ENCODE measurements at regions of chr9 and their contacts with region 1.

Region 1: DNA sequence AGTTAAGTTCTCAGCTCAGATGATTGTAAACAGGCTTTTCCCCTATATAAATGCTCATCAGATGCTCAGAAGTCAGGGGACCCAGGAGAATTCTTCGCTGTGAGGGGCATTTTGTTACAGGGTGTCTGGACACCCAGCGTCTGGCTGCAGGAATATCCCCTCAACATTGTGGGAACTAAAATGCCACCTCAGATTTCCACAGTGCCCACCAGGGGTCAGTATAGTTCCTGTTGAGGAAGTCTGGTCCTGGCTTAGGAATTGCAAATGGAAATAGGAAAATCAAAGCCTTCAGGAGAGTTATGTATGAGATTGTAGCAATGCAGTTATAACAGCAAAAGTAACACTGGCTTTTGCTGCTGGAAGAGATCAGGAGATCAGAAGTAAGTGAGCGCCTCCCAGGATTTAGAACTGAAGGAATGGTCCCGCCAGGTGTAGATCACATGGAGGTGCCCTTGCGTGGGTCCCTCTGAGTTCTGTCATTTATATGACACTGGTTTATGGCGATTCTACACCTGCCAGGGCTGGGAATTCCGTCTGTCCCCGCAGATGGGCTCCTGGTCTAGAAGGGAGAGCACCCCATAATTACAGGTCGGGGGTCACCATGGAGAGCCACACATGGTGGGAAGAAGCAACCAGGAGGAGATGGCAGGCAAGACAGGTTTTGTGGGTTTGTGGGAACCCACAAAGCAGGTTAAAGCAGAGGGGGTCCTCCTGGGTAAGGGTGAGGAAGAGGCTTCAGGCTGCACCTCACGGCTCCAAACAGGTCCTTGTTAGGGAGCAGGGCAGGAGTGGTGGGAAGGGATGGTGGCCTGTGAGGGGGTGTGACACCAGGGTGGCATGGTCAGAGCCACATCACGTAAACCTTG is 47.0 kb upstream of the CTSL start:
- DNase-seq: peak in 5 of 9 donors; percentile 25 to 44 (median 30)
- ATAC-seq: peak; percentile 50
- H3K4me3 ChIP-seq: no peak overlapping the region
- H3K4me3 Mint-ChIP-seq: no peak overlapping the region
- H3K27ac ChIP-seq: no peak overlapping the region
- H3K27ac Mint-ChIP-seq: peak overlapping the region in 1 of 9 donors; percentile 61
- H3K4me1 ChIP-seq: no peaks in the 10 kb centered on the region
- H3K4me1 Mint-ChIP-seq: peaks cover 5 to 19% (median 11%) of the 10 kb centered on the region in 7 donors
- H3K27me3 ChIP-seq: no peaks in the 10 kb centered on the region
- H3K27me3 Mint-ChIP-seq: no peaks in the 10 kb centered on the region

Region 2: GRCh38 chr9:87725900-87726709 is 47.2 kb after region 1 on chr9 and contains the start of gene CTSL:
- CTCF ChIA-PET with region 1: interaction called, 3 read pairs
- POLR2A ChIA-PET with region 1: no interaction called
- intact Hi-C with region 1: loop called in 1 of 2 experiments (anchors 1 kb)
- DNase-seq: peak; percentile 30 to 65 (median 46)
- ATAC-seq: peak; percentile 82
- H3K4me3 ChIP-seq: peak within 1 kb of the TSS; percentile 77
- H3K4me3 Mint-ChIP-seq: peak within 1 kb of the TSS; percentile 85 to 97 (median 93)
- H3K27ac ChIP-seq: peak within 1 kb of the TSS; percentile 56
- H3K27ac Mint-ChIP-seq: peak within 1 kb of the TSS; percentile 63 to 98 (median 91)
- H3K4me1 ChIP-seq: no peaks in the 10 kb centered on the region
- H3K4me1 Mint-ChIP-seq: peaks cover 10 to 55% (median 31%) of the 10 kb centered on the region in 7 donors
- H3K27me3 ChIP-seq: no peaks in the 10 kb centered on the region
- H3K27me3 Mint-ChIP-seq: peaks cover 0 to 43% (median 0%) of the 10 kb centered on the region in 5 donors
- total RNA-seq, gene CTSL: 3.7 to 67.9 (median 14.9) TPM

Region 3: DNA sequence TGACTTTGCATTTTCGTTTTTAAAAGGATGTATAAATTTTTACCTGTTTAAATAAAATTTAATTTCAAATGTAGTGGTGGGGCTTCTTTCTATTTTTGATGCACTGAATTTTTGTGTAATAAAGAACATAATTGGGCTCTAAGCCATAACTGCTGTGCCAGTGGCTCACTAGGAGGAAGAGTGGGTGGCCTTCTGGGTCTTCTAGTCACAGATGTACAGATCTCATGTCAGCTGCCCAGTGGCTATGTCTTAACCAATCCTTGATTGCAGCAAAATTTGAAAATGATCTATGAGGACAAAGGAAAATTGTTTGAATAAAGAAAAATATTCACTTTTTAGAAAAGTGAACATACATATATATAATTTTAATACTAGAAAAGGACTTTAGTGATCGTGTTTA is 52.4 kb after region 1 on chr9:
- CTCF ChIA-PET with region 1: interaction called, 3 read pairs
- POLR2A ChIA-PET with region 1: no interaction called
- intact Hi-C with region 1: loop called in 1 of 2 experiments (anchors 1 kb)
- DNase-seq: no peak
- ATAC-seq: no peak
- H3K4me3 ChIP-seq: no peak overlapping the region
- H3K4me3 Mint-ChIP-seq: no peak overlapping the region
- H3K27ac ChIP-seq: no peak overlapping the region
- H3K27ac Mint-ChIP-seq: no peak overlapping the region
- H3K4me1 ChIP-seq: no peaks in the 10 kb centered on the region
- H3K4me1 Mint-ChIP-seq: peaks cover 4 to 58% (median 36%) of the 10 kb centered on the region in 7 donors
- H3K27me3 ChIP-seq: no peaks in the 10 kb centered on the region
- H3K27me3 Mint-ChIP-seq: peaks cover 0 to 13% (median 11%) of the 10 kb centered on the region in 5 donors

Region 4: DNA sequence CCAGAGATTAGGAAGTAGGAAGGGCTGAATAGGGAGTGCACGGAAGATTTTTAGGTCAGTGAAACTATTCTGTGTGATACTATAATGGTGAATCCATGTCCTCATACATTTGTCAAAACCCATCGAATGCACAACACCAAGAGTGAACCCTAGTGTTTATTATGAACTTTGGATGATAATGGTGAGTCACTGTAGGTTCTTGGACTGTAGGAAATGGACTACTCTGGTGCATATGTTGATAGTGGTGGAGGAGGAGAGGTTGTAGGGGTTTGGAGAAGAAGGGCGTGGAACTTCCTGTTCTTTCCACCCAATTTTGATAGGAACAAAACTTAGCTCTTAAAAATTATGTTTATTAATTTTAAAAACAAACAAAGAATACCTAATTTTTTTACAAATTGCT is 61.3 kb after region 1 on chr9:
- CTCF ChIA-PET with region 1: no interaction called
- POLR2A ChIA-PET with region 1: no interaction called
- intact Hi-C with region 1: loop called in 1 of 2 experiments (anchors 2 kb)
- DNase-seq: no peak
- ATAC-seq: no peak
- H3K4me3 ChIP-seq: no peak overlapping the region
- H3K4me3 Mint-ChIP-seq: no peak overlapping the region
- H3K27ac ChIP-seq: no peak overlapping the region
- H3K27ac Mint-ChIP-seq: no peak overlapping the region
- H3K4me1 ChIP-seq: no peaks in the 10 kb centered on the region
- H3K4me1 Mint-ChIP-seq: peaks cover 2 to 21% (median 14%) of the 10 kb centered on the region in 7 donors
- H3K27me3 ChIP-seq: no peaks in the 10 kb centered on the region
- H3K27me3 Mint-ChIP-seq: peaks cover 0 to 23% (median 6%) of the 10 kb centered on the region in 5 donors

Region 5: GRCh38 chr9:87812375-87813118 is 133.7 kb after region 1 on chr9:
- CTCF ChIA-PET with region 1: interaction called, 12 read pairs
- POLR2A ChIA-PET with region 1: no interaction called
- intact Hi-C with region 1: loop called in 1 of 2 experiments (anchors 1 kb)
- DNase-seq: peak in 2 of 9 donors; percentile 10 to 46
- ATAC-seq: peak; percentile 66
- H3K4me3 ChIP-seq: no peak overlapping the region
- H3K4me3 Mint-ChIP-seq: peak overlapping the region in 7 of 10 donors; percentile 15 to 67 (median 47)
- H3K27ac ChIP-seq: no peak overlapping the region
- H3K27ac Mint-ChIP-seq: peak overlapping the region in 1 of 9 donors; percentile 6
- H3K4me1 ChIP-seq: no peaks in the 10 kb centered on the region
- H3K4me1 Mint-ChIP-seq: peaks cover 0 to 20% (median 11%) of the 10 kb centered on the region in 7 donors
- H3K27me3 ChIP-seq: no peaks in the 10 kb centered on the region
- H3K27me3 Mint-ChIP-seq: peaks cover 0 to 13% (median 6%) of the 10 kb centered on the region in 5 donors

Region 6: DNA sequence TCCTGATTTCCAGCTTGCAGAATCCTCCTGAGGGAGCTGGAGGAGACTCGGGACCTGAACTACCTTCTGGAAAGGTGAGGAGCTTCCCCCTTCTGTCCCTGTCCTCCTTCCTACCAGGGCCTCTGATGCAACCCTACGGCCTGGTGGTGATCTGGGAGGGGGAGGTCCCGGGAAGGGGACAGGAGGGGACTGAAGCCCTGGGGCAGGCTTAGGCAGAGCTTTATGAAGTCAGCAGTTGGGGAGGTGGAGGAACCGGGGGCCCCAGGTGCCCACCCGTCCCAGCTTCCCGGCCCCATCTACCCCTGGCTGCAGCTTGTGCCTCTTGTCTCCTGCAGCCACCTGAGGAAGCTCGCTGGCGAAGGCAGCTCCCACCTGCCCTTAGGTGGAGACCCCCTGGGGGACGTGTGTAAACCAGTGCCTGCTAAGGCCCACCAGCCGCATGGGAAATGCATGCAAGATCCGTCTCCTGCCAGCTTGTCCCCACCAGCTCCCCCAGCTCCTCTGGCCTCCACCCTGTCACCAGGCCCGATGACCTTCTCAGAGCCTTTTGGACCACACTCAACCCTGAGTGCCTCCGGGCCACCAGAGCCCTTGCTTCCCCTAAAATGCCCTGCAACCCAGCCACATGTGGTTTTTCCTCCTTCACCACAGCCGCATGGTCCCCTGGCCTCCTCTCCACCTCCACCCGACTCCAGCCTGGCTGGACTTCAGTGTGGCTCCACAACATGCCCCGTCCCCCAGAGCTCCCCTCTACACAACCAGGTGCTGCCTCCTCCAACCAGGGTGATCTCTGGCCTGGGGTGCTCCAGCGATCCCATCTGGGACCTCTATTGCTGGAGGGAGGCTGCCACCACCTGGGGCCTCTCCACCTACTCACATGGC is 205.9 kb after region 1 on chr9:
- CTCF ChIA-PET with region 1: no interaction called
- POLR2A ChIA-PET with region 1: no interaction called
- intact Hi-C with region 1: loop called in 1 of 2 experiments (anchors 1 kb)
- DNase-seq: no peak
- ATAC-seq: no peak
- H3K4me3 ChIP-seq: no peak overlapping the region
- H3K4me3 Mint-ChIP-seq: no peak overlapping the region
- H3K27ac ChIP-seq: no peak overlapping the region
- H3K27ac Mint-ChIP-seq: no peak overlapping the region
- H3K4me1 ChIP-seq: no peaks in the 10 kb centered on the region
- H3K4me1 Mint-ChIP-seq: peaks cover 0 to 5% (median 0%) of the 10 kb centered on the region in 7 donors
- H3K27me3 ChIP-seq: no peaks in the 10 kb centered on the region
- H3K27me3 Mint-ChIP-seq: peaks cover 0 to 14% (median 0%) of the 10 kb centered on the region in 5 donors

Region 7: GRCh38 chr9:88578121-88579054 is 899.5 kb after region 1 on chr9:
- CTCF ChIA-PET with region 1: no interaction called
- POLR2A ChIA-PET with region 1: no interaction called
- intact Hi-C with region 1: loop called in 1 of 2 experiments (anchors 5 kb)
- DNase-seq: peak in 7 of 9 donors; percentile 36 to 78 (median 48)
- ATAC-seq: peak; percentile 80
- H3K4me3 ChIP-seq: no peak overlapping the region
- H3K4me3 Mint-ChIP-seq: peak overlapping the region in 5 of 10 donors; percentile 38 to 63 (median 59)
- H3K27ac ChIP-seq: no peak overlapping the region
- H3K27ac Mint-ChIP-seq: peak overlapping the region in 1 of 9 donors; percentile 34
- H3K4me1 ChIP-seq: no peaks in the 10 kb centered on the region
- H3K4me1 Mint-ChIP-seq: peaks cover 0 to 6% (median 3%) of the 10 kb centered on the region in 7 donors
- H3K27me3 ChIP-seq: no peaks in the 10 kb centered on the region
- H3K27me3 Mint-ChIP-seq: peaks cover 7 to 25% (median 16%) of the 10 kb centered on the region in 5 donors